ENCODE measurements at regions of chr5 and their contacts with region 1.

Region 1: DNA sequence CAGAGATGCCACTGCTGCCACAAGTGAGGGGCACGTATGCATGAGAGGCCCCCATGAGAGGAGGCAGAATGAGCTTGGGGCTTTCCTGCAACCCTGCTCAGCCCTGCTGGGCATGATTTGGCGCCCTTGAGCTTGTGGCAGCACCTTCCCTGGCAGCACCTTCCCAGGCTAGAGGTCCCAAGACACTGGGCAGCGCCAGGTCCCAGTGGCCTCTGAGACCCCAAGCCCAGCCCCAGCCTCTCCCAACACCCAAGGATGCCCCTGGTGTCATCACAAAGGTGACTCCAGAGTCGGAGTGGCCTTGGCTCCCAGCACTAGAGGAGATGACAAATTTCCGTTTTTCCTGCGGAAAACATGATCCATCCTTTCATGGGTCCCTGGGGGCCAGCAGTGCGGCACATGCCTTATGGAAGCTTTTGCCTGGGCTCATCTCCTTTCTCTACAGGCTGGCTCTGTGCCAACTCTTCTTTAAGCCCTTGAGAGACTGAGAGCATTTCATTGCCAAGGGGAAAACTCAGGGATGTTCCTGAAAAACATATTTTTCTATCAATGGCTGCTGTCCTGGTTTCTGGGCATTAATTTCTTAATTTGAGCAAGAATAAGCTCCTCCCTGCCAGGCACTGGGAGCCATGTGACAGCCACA is 77.1 kb upstream of the ADAMTS2 start:
- DNase-seq: no peak
- H3K4me3 ChIP-seq: no peak overlapping the region
- H3K27ac ChIP-seq: no peak overlapping the region
- H3K4me1 ChIP-seq: no peaks in the 10 kb centered on the region
- CTCF ChIP-seq: no peak

Region 2: DNA sequence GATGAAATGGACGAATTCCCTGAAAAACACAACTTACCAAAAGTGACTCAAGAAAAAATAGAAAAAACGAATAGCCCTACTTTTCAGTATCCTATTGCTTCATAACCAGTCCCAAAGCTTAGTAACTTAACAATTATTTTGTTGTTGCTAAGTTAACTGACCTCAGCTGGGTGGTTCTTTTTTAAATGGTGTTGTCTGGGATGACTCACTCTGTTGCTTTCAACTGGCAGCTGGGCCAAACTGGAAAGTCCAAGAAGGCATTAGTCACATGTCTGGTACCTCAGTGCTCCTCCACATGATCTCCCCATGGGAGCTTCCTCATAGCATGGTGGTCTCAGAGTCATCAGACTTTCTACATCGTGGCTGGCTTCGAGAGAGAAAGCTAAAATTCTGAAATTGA is 29.3 kb before region 1 on chr5:
- CTCF ChIA-PET with region 1: no interaction called
- POLR2A ChIA-PET with region 1: interaction called, 10 read pairs
- intact Hi-C with region 1: no loop called
- DNase-seq: no peak
- H3K4me3 ChIP-seq: no peak overlapping the region
- H3K27ac ChIP-seq: no peak overlapping the region
- H3K4me1 ChIP-seq: no peaks in the 10 kb centered on the region
- CTCF ChIP-seq: no peak